HepG2 (cell line): ENCODE measurements at regions of chr7 and their contacts with region 1.

Region 1: DNA sequence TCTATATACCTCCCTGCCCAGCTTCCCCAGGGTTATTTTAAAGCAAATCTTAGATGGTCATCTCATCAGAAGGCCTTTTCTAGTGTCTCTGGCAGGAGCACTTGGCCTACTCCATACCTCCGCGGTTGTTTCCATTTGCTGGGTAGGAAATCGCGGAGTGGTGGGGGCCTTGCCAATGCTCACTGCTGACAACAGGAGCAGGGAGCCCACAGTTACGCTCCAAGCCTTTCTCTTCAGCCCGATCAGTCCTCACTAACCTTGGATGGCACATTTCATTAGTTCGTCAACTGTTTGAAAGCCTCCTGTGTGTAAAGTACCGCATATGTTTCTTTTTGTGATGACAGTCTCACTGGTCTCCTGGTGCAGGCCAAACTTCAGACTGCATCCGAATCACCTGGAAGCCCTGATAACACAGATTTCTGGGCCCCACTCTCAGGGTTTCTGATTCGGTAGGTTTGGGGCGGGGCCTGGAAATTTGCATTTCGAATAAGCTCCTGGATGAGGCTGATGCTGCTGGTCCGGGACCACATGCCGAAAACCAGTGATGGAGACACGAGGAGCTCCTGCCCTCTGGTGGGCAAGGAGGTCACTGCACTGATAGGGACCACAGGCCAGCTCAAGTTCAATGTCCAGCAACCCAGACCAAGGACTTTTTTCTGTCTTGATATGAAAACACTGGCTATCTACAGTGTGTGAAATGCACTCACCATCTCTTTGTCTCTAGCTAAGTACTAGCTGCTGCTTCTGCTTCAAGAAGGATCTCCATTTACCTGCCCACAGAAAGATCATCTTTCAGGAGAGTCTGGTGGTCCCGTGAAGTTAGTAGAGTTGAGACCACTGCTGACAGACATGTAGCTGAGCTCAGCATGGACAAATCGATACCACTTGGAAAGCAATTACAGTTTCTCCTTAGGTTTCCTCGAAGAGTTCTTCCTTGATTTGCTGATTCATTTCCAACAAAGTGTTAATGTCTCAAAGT is 14.0 kb downstream of the LRGUK start:
- DNase-seq: peak; percentile 34
- ATAC-seq: peak; percentile 96
- H3K4me3 ChIP-seq: no peak overlapping the region
- H3K27ac ChIP-seq: no peak overlapping the region
- H3K4me1 ChIP-seq: peaks cover 6% of the 10 kb centered on the region; the same call in 1 of the 2 replicates
- H3K27me3 ChIP-seq: no peaks in the 10 kb centered on the region
- CTCF ChIP-seq: peak; percentile 90
- EP300 ChIP-seq: no peak
- POLR2A ChIP-seq: no peak
- RAD21 ChIP-seq: peak; percentile 49; the same call in 1 of the 2 replicates

Region 2: GRCh38 chr7:134101716-134102115 is 39.5 kb before region 1 on chr7:
- CTCF ChIA-PET with region 1: no interaction called
- POLR2A ChIA-PET with region 1: no interaction called
- in situ Hi-C with region 1: no loop called
- intact Hi-C with region 1: no loop called
- DNase-seq: no peak
- ATAC-seq: no peak
- H3K4me3 ChIP-seq: no peak overlapping the region
- H3K27ac ChIP-seq: no peak overlapping the region
- H3K4me1 ChIP-seq: no peaks in the 10 kb centered on the region
- H3K27me3 ChIP-seq: no peaks in the 10 kb centered on the region
- CTCF ChIP-seq: no peak
- EP300 ChIP-seq: no peak
- POLR2A ChIP-seq: no peak
- RAD21 ChIP-seq: no peak

Region 3: GRCh38 chr7:134174797-134175261 is 33.7 kb after region 1 on chr7:
- CTCF ChIA-PET with region 1: no interaction called
- POLR2A ChIA-PET with region 1: no interaction called
- in situ Hi-C with region 1: no loop called
- intact Hi-C with region 1: loop called (anchors 1 kb)
- DNase-seq: peak; percentile 10
- ATAC-seq: no peak
- H3K4me3 ChIP-seq: no peak overlapping the region
- H3K27ac ChIP-seq: no peak overlapping the region
- H3K4me1 ChIP-seq: no peaks in the 10 kb centered on the region
- H3K27me3 ChIP-seq: no peaks in the 10 kb centered on the region
- CTCF ChIP-seq: no peak
- EP300 ChIP-seq: no peak
- POLR2A ChIP-seq: no peak
- RAD21 ChIP-seq: no peak

Region 4: GRCh38 chr7:134327896-134328295 is 186.7 kb after region 1 on chr7:
- CTCF ChIA-PET with region 1: no interaction called
- POLR2A ChIA-PET with region 1: no interaction called
- in situ Hi-C with region 1: no loop called
- intact Hi-C with region 1: loop called (anchors 5 kb)
- DNase-seq: peak; percentile 57
- ATAC-seq: peak; percentile 89
- H3K4me3 ChIP-seq: no peak overlapping the region
- H3K27ac ChIP-seq: no peak overlapping the region
- H3K4me1 ChIP-seq: peaks cover 22% of the 10 kb centered on the region
- H3K27me3 ChIP-seq: 0 out of 5 replicates have a peak, but pooled peaks cover 0 to 3% of the 10 kb centered on the region in 2 experiments
- CTCF ChIP-seq: peak; percentile 75
- EP300 ChIP-seq: no peak
- POLR2A ChIP-seq: no peak
- RAD21 ChIP-seq: peak; percentile 43; the same call in 1 of the 2 replicates

Region 5: GRCh38 chr7:134351424-134351823 is 210.2 kb after region 1 on chr7:
- CTCF ChIA-PET with region 1: no interaction called
- POLR2A ChIA-PET with region 1: no interaction called
- in situ Hi-C with region 1: no loop called
- intact Hi-C with region 1: no loop called
- DNase-seq: no peak
- ATAC-seq: no peak
- H3K4me3 ChIP-seq: no peak overlapping the region
- H3K27ac ChIP-seq: no peak overlapping the region
- H3K4me1 ChIP-seq: peaks cover 31% of the 10 kb centered on the region
- H3K27me3 ChIP-seq: 0 out of 5 replicates have a peak, but pooled peaks cover 0 to 3% of the 10 kb centered on the region in 2 experiments
- CTCF ChIP-seq: no peak
- EP300 ChIP-seq: no peak
- POLR2A ChIP-seq: no peak
- RAD21 ChIP-seq: no peak

Region 6: GRCh38 chr7:134480736-134481135 is 339.6 kb after region 1 on chr7:
- CTCF ChIA-PET with region 1: no interaction called
- POLR2A ChIA-PET with region 1: no interaction called
- in situ Hi-C with region 1: no loop called
- intact Hi-C with region 1: no loop called
- DNase-seq: peak; percentile 78
- ATAC-seq: peak; percentile 89
- H3K4me3 ChIP-seq: no peak overlapping the region
- H3K27ac ChIP-seq: no peak overlapping the region
- H3K4me1 ChIP-seq: peaks cover 11% of the 10 kb centered on the region
- H3K27me3 ChIP-seq: no peaks in the 10 kb centered on the region
- CTCF ChIP-seq: no peak
- EP300 ChIP-seq: no peak
- POLR2A ChIP-seq: no peak
- RAD21 ChIP-seq: no peak